ENCODE measurements at regions of chr1 and their contacts with region 1.

Region 1: DNA sequence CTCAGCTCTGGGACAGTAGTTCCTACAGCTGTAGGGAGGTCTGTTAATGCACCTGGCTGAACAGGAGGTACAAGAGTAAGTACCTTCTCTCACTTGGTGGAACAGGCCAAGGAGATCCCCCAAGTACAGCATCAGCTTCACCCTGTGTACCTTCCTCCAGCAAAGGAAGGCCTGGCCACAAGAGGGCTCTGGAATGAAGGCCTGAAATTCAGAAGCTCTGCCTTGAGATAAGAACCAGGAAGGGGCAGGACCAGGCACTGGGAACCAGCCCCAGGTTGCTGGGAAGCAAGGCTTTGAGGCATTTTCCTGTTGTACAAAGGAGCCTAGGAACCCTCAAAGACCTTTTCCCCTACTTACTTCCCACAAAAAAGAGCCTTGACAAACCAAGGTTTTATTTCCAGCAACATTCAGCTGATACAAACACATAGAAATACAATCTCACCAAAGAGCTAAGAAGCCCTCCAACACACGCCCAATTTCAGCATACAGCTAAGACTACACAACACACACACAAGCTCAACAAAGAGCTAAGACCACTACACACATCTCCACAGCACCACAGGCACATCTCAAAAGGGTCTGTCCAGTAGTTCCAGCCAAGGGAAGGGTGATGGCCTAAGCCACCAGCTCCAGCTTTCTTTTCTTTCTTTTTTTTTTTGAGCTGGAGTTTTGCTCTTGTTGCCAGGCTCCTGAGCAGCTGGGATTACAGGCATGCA is 23.5 kb downstream of the F11R start:
- DNase-seq: peak; percentile 79
- H3K4me3 ChIP-seq: no peak overlapping the region
- H3K27ac ChIP-seq: peak overlapping the region; percentile 63
- H3K4me1 ChIP-seq: no peaks in the 10 kb centered on the region
- H3K27me3 ChIP-seq: no peaks in the 10 kb centered on the region
- CTCF ChIP-seq: peak; percentile 58

Region 2: GRCh38 chr1:161045750-161046571 is 48.5 kb after region 1 on chr1 and contains the start of gene USF1:
- intact Hi-C with region 1: loop called (anchors 10 kb)
- DNase-seq: peak; percentile 95
- H3K4me3 ChIP-seq: peak within 1 kb of the TSS; percentile 83
- H3K27ac ChIP-seq: peak within 1 kb of the TSS; percentile 96
- H3K4me1 ChIP-seq: no peaks in the 10 kb centered on the region
- H3K27me3 ChIP-seq: no peaks in the 10 kb centered on the region
- CTCF ChIP-seq: no peak
- total RNA-seq, gene USF1: 63.6 TPM

Region 3: GRCh38 chr1:161098210-161099068 is 101.0 kb after region 1 on chr1 and contains the start of gene KLHDC9:
- intact Hi-C with region 1: loop called (anchors 5 kb)
- DNase-seq: peak; percentile 90
- H3K4me3 ChIP-seq: peak within 1 kb of the TSS; percentile 61
- H3K27ac ChIP-seq: peak within 1 kb of the TSS; percentile 69
- H3K4me1 ChIP-seq: peaks cover 3% of the 10 kb centered on the region
- H3K27me3 ChIP-seq: no peaks in the 10 kb centered on the region
- CTCF ChIP-seq: no peak
- total RNA-seq, gene KLHDC9: 7.1 to 10.1 TPM